ENCODE measurements at regions of chr20 and their contacts with region 1.

Region 1: DNA sequence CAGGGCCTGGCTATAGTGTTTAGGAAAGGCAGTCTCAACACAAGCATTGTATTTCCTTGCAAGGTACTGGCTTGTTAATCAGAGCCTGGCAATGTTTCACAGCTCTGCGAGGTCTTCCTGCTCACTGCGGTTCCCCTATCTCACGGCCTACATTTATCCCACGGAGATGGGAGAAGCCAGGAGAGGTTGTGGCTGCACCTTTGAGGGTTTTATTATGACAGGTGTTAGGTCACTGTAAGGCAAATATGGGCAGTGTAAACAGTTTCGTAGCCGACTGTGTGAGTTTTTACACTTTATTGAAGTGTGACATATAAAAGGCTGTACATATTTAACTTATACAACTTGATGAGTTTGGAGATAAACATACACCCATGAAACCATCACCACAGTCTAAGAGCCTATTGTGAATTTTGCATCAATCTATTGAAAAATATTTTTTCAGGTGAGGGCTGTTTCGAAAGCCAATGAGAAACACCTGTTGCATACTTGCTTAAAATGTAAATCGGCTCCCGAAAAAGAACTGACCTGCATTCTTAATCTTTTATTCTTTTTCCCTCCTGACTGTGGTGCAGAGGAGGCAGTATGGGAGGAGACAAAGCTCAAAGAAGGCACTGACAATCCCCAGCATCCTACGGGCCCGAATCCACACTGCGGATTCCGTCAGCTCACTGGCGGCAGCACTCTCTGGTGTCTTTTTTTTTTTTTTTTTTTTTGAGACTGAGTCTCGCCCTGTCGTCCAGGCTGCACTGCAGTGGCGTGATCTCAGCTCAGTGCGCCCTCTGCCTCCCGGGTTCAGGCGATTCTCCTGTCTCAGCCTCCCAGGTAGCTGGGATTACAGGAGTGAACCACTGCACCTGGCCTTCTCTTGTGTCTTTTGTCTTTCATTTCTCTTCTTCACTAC is 7.5 kb upstream of the RBM38 start:
- DNase-seq: no peak
- H3K4me3 ChIP-seq: no peak overlapping the region
- H3K27ac ChIP-seq: no peak overlapping the region
- H3K4me1 ChIP-seq: no peaks in the 10 kb centered on the region
- H3K27me3 ChIP-seq: no peaks in the 10 kb centered on the region
- CTCF ChIP-seq: no peak
- POLR2A ChIP-seq: no peak

Region 2: DNA sequence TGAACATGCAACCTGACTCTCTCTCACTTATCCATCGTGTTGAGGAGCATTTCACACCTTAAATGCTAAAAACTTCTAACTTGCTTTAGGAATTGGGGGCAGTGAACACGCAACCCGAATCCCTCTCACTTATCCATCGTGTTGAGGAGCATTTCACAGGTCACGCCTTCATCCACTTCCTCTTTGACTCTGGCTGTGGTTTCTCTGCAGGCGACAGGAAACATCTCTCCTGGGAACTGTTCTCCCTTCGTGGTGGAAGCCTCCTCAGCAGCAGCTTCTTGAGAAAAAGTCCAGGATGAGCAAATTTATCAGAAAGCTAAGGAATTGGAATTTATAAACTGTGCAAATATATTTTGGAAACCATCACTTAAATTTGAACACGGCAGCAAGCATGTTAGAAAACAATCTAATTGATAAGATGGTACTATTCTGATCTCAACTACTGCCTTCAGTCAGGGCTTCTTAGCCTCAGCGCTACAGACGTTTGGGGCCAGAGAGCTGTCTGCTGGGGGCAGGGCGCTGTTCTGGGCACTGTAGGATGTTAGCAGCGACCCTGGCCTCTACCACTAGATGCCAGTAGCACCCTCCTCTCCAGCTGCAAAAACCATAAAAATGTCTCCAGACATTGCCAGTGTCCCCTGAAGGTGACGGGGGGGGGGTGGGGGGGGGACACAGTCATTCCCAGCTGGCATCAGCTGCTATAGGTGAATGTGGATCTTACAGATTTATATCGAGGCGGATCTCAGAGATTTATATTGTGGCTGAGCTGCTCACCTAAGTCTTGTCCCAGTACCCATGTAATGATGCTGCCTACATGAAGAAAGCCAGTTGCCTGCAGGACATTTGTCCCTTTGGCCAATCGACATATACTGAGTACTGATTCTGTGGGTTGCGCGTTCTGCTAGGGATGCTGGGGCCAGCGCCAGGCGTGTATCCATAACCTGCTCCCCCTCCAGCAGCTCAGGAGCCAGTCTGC is 115.0 kb after region 1 on chr20:
- intact Hi-C with region 1: loop called (anchors 5 kb)
- DNase-seq: peak; percentile 55
- H3K4me3 ChIP-seq: no peak overlapping the region
- H3K27ac ChIP-seq: no peak overlapping the region
- H3K4me1 ChIP-seq: no peaks in the 10 kb centered on the region
- H3K27me3 ChIP-seq: no peaks in the 10 kb centered on the region
- CTCF ChIP-seq: peak in 1 of 3 experiments; percentile 11
- POLR2A ChIP-seq: no peak

Region 3: DNA sequence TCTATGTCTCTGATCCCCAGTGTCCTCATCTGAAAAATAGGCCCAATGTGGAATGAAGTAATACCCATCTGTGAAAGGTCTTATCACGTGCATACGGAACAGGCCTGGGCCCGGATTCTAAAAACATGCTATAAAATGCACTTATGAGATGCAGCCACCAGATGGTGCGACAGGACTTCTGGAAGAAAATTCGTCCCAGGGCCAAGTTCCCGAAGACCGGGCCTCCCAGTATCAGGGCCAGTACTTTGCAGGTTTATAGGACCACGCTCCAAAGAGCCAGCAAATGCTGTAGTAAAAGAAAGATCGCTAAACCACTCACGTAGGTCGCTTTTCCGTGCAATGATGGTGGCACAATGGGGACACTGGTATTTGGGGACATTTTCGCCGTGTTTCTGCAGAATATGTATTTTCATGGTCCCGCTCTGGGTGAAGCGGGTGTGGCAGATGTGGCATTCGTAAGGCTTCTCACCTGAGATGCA is 130.6 kb after region 1 on chr20:
- intact Hi-C with region 1: no loop called
- DNase-seq: peak; percentile 78
- H3K4me3 ChIP-seq: no peak overlapping the region
- H3K27ac ChIP-seq: no peak overlapping the region
- H3K4me1 ChIP-seq: no peaks in the 10 kb centered on the region
- H3K27me3 ChIP-seq: no peaks in the 10 kb centered on the region
- CTCF ChIP-seq: peak; percentile 71 to 78 (median 75)
- POLR2A ChIP-seq: no peak